ENCODE measurements at regions of chr2 and their contacts with region 1.

Region 1: DNA sequence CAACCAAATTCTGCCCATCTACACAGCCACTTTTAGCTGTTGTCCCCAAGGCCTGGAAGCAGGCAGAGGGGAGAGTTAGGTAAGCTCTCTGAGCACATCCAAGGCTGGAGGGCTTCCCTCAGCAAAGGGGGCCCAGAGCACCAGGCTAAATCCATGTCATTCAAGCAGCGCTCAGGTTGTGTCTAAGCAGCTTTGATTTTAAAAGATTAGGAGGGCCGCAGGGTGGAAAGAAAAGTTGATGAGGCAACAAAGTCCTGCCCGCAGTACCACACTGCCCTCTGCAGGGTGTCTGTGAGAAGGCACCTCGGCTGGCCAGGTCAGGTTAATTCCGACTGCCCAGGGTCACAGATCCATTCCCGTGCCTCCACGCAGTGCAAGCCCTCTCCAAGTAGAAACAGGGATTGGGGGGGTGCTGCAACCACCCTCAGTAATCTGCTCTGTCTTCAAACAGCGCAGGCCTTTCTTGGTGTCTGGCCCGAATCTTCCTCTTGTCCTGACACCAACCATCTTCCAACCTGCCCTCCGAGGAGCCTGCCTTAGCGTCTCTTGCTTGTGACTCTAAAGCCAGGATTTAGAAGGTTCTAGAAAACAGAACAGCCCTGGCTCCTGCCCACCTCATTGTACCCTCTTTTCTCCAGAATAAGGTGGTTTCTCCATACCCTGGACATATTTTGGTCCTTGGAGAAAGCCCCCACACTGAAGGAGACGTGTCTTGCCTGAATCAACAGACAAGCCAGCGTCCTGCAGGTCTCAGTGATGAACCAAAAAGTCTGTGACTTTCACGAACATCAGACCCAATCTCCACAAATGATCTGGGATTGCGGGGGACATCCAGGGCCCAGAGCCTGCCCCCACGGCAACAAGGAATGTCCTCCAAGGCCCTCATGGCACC is 289.2 kb downstream of the TNS1 start:
- DNase-seq: peak; percentile 81 to 88 (median 87)
- H3K4me3 ChIP-seq: no peak overlapping the region
- H3K27ac ChIP-seq: peak overlapping the region; percentile 15 to 56
- H3K4me1 ChIP-seq: peaks cover 0 to 8% (median 4%) of the 10 kb centered on the region in 3 donors
- H3K27me3 ChIP-seq: no peaks in the 10 kb centered on the region
- CTCF ChIP-seq: peak; percentile 97

Region 2: DNA sequence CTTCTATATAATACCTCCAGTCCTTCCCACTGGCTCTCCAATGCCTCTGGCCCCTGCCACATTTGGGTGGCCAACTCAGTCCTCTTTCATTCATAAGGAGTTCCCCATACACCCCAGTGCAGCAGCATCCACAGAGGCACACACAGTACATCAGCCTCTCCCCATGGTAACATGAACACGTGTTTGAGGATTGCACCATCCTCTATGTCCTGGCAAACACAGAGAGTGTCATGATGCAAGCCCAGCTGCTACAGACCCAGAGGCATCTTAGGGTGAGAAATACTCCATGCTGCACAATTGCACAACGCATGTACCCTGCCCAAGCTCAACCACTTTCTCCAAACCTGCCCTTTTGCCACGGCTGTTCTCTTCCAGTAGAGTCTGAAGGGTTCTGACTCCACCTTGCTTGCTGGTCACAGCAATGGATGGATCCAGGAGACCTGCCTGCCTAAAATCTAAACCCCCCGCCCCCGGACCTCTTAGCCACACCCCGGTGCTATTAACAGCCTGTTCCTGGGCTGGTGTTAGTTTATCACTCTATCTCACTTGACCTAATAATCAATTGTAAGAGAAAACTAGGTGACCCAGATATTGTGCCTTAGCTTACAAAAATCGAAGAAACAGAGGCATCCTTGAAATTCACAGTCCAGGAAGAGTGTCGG is 1029.7 kb before region 1 on chr2:
- intact Hi-C with region 1: loop called (anchors 5 kb)
- DNase-seq: peak in 1 of 5 donors; percentile 24
- H3K4me3 ChIP-seq: no peak overlapping the region
- H3K27ac ChIP-seq: no peak overlapping the region
- H3K4me1 ChIP-seq: peaks cover 0 to 14% (median 5%) of the 10 kb centered on the region in 3 donors
- H3K27me3 ChIP-seq: no peaks in the 10 kb centered on the region
- CTCF ChIP-seq: no peak

Region 3: DNA sequence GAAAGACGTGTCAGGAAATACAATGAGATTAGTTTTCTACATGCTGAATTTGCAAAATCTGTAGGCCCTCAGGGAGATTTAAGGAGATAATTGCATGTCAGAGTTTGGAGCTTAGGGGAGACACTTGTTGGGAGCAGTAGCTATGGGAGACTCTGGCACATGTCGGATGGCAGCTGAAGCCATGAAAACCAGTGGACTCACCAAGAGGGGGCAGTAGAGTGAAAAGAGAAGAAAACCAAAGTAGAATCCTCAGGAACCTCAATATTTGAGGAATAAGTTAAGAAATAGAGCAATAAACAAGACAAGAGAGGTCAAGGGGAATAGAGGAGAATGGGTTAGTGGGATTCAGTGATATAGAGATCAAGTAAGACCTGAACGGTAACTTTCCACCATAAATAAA is 380.2 kb after region 1 on chr2:
- intact Hi-C with region 1: no loop called
- DNase-seq: no peak
- H3K4me3 ChIP-seq: no peak overlapping the region
- H3K27ac ChIP-seq: no peak overlapping the region
- H3K4me1 ChIP-seq: no peaks in the 10 kb centered on the region
- H3K27me3 ChIP-seq: no peaks in the 10 kb centered on the region
- CTCF ChIP-seq: no peak

Measured in kidney (tissue), 22 donors.